ENCODE measurements at regions of chr12 and their contacts with region 1.

Region 1: DNA sequence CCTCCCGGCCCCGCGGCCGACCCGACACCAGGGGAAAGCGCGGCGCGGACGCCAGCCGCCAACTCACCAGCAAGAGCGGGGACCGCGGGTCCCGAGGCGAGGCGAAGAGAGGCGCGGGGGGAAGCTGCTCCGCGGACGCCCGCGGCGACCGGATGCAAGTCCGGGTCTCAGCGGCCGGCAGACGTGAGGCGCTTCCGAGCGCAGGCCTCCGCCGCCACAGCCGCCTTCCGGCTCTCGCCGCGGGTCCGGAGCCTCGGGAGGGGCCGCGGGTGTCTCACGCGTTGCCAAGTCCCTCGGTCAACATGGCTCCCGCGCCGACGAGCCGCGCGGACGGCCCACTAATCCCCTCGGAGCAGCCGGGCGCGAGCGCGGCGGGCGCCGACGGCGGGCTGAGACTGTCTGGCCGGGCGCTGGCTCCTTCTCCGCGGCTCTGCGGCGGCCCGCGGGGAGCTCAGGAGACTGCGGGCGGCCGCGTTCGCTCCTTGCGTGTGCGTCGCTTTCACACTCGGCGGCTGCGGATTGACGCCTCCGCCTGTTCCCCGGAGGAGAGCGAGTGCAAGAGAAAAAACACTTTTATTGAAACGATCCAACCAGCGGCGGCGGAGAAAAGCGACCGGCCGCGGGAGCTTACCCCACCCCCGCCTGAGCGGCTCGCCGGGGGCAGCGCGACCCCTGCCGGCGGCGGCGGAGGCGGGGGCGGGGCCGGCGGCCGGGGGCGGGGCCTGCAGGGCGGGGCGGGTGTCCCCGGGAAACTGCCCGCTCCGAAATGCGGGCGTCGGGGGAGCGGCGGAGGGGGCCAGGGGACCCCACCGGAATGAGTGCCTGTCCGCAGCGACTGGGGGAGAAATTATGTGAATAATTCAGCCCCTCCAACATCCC is at the start of gene CDK17:
- DNase-seq: peak; percentile 95
- ATAC-seq: peak; percentile 61
- H3K4me3 Mint-ChIP-seq: peak within 1 kb of the TSS; percentile 97
- H3K27ac Mint-ChIP-seq: peak within 1 kb of the TSS; percentile 99
- H3K4me1 Mint-ChIP-seq: peaks cover 33% of the 10 kb centered on the region
- H3K27me3 Mint-ChIP-seq: no peaks in the 10 kb centered on the region
- total RNA-seq, gene CDK17: 51.7 to 60.6 TPM

Region 2: DNA sequence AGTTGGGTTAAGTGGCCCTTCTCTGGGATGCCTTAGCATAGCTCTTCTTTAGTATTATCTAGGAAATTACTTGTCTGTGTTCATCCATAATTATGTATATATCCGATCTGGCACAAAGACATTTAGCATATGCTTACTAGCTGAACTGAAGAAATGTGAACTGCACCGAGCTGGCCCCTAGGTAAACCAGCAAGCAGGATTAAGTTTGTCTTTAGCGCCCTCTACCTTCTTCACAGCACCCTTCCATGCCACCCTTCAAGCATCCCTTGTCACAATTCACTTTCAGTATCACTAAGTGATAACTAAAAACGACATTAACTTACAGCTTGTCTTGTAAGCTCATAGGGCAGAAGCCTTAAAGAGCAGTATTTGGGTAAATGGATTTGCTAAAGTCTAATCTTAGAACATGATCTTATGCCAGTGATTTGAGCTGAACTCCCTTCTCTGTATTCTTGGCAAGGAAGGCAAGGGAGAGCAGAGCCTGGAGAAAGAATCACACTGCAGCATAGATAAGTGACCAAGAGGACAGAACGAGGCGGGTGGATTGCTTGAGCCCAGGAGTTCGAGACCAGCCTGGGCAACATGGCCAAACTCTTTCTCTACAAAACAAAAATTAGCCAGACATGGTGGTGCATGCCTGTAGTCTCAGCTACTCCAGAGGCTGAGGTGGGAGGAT is 401.4 kb before region 1 on chr12:
- POLR2A ChIA-PET with region 1: no interaction called
- DNase-seq: no peak
- ATAC-seq: peak; percentile 98
- H3K4me3 Mint-ChIP-seq: no peak overlapping the region
- H3K27ac Mint-ChIP-seq: no peak overlapping the region
- H3K4me1 Mint-ChIP-seq: peaks cover 7% of the 10 kb centered on the region
- H3K27me3 Mint-ChIP-seq: no peaks in the 10 kb centered on the region

Region 3: DNA sequence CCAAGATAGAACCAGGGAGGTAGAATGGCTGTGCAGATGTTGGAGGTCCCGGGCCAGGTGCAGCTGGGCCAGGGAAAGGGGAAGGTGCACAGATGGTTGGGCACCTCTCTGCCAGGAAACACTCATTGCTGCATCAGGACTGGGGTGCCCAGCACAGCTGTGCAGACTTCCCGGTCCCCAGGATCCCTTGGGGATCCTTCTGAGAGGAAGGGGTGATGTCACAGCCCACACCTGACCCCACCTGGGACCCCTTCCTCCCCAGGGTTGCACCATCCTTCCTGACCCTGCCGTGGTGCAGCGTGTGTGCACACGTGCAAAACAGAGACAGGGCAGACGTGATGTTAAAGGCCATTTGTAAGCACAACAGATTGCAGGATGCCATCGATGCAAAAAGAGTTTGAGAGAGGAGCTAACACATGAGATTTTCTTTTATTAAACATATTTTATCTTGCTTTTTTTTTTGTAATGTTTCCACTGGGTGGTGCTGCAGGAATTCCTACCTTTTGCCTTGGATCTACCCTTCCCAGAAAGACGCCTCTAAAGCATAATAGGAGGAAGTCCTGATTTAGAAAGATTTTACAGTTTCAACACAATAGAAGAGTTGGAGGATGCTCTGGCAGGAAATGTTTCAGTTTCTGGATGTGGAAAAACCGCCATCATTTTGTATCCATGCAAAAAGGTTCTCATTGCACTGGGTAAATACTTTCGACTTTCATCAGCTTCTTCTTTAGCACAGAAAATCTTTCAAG is 191.2 kb before region 1 on chr12:
- POLR2A ChIA-PET with region 1: interaction called, 17 read pairs
- DNase-seq: no peak
- ATAC-seq: no peak
- H3K4me3 Mint-ChIP-seq: peak overlapping the region; percentile 59
- H3K27ac Mint-ChIP-seq: peak overlapping the region; percentile 39
- H3K4me1 Mint-ChIP-seq: peaks cover 72% of the 10 kb centered on the region
- H3K27me3 Mint-ChIP-seq: no peaks in the 10 kb centered on the region

Region 4: DNA sequence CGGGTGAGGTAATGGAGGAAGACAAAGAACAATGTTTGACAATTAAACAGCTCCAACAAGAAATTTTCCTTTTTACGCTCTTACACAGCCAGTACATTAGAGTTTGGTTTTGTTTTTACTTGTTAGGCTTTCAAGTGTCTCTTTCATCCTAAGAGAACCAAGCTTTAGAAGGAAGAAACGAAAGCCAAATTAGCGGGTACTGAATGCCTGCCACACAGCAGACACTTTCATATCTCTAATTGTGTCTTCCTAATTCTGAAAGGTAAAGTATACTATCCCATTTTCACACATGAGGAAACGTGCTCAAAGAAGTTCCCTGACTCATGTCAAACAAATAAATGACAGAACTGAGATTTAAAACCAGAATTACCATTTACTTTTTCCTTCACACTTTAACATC is 64.9 kb before region 1 on chr12:
- POLR2A ChIA-PET with region 1: interaction called, 12 read pairs
- DNase-seq: no peak
- ATAC-seq: peak; percentile 80
- H3K4me3 Mint-ChIP-seq: peak overlapping the region; percentile 72
- H3K27ac Mint-ChIP-seq: peak overlapping the region; percentile 76
- H3K4me1 Mint-ChIP-seq: peaks cover 27% of the 10 kb centered on the region
- H3K27me3 Mint-ChIP-seq: no peaks in the 10 kb centered on the region

Region 5: GRCh38 chr12:96387981-96388380 is 12.2 kb before region 1 on chr12:
- POLR2A ChIA-PET with region 1: interaction called, 10 read pairs
- DNase-seq: no peak
- ATAC-seq: no peak
- H3K4me3 Mint-ChIP-seq: no peak overlapping the region
- H3K27ac Mint-ChIP-seq: no peak overlapping the region
- H3K4me1 Mint-ChIP-seq: peaks cover 31% of the 10 kb centered on the region
- H3K27me3 Mint-ChIP-seq: no peaks in the 10 kb centered on the region

Region 6: DNA sequence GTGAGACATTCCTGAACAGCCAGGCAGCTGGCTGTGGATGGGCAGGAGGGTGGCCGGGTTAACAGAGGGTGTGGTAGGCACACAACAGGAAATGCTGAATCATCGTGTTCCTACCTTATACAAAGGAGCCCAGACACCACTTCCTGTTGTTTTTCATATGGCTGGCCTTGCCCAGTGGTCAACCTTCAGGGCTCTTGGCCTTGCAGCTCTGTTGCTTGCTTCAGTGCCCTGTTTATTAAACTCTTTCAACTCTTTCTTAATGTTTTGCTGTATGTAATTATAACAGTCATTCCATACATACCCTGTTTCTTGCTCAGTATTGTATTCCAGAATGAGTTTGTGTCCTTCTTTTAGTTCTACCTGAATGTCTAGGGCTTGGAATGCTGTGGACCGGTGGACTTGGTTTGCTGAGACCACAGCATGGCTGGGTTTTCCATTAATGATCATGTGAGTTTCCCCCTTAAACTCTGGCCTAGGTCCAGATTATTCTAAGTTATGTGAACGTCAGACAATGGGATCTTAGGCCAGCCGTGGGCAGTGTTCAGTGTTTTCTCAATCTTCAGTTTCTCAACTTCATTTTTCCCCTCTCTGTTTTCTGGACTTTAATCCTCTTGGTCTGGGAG is 101.1 kb after region 1 on chr12:
- POLR2A ChIA-PET with region 1: interaction called, 13 read pairs
- DNase-seq: no peak
- ATAC-seq: peak; percentile 81
- H3K4me3 Mint-ChIP-seq: peak overlapping the region; percentile 56
- H3K27ac Mint-ChIP-seq: peak overlapping the region; percentile 52
- H3K4me1 Mint-ChIP-seq: peaks cover 32% of the 10 kb centered on the region
- H3K27me3 Mint-ChIP-seq: no peaks in the 10 kb centered on the region

Region 7: GRCh38 chr12:96522690-96523089 is 122.5 kb after region 1 on chr12:
- POLR2A ChIA-PET with region 1: no interaction called
- DNase-seq: no peak
- ATAC-seq: no peak
- H3K4me3 Mint-ChIP-seq: no peak overlapping the region
- H3K27ac Mint-ChIP-seq: no peak overlapping the region
- H3K4me1 Mint-ChIP-seq: peaks cover 15% of the 10 kb centered on the region
- H3K27me3 Mint-ChIP-seq: peaks cover 10% of the 10 kb centered on the region